IMR-90 (cell line): ENCODE measurements at regions of chr3 and their contacts with region 1.

Region 1: GRCh38 chr3:30319713-30320112 is 286.7 kb upstream of the TGFBR2 start:
- DNase-seq: peak; percentile 57
- ATAC-seq: peak; percentile 63
- H3K4me3 ChIP-seq: no peak overlapping the region
- H3K27ac ChIP-seq: no peak overlapping the region
- H3K4me1 ChIP-seq: peaks cover 7% of the 10 kb centered on the region; the same call in 1 of the 2 replicates
- H3K27me3 ChIP-seq: no peaks in the 10 kb centered on the region
- CTCF ChIP-seq: peak; percentile 47
- POLR2A ChIP-seq: no peak
- RAD21 ChIP-seq: peak; percentile 60

Region 2: GRCh38 chr3:30042274-30042859 is 277.3 kb before region 1 on chr3:
- CTCF ChIA-PET with region 1: no interaction called
- POLR2A ChIA-PET with region 1: no interaction called
- dilution Hi-C with region 1: no loop called
- in situ Hi-C with region 1: no loop called
- intact Hi-C with region 1: loop called (anchors 10 kb)
- DNase-seq: peak; percentile 79
- ATAC-seq: peak; percentile 81
- H3K4me3 ChIP-seq: no peak overlapping the region
- H3K27ac ChIP-seq: no peak overlapping the region
- H3K4me1 ChIP-seq: no peaks in the 10 kb centered on the region
- H3K27me3 ChIP-seq: no peaks in the 10 kb centered on the region
- CTCF ChIP-seq: peak; percentile 88
- POLR2A ChIP-seq: no peak
- RAD21 ChIP-seq: peak; percentile 92

Region 3: DNA sequence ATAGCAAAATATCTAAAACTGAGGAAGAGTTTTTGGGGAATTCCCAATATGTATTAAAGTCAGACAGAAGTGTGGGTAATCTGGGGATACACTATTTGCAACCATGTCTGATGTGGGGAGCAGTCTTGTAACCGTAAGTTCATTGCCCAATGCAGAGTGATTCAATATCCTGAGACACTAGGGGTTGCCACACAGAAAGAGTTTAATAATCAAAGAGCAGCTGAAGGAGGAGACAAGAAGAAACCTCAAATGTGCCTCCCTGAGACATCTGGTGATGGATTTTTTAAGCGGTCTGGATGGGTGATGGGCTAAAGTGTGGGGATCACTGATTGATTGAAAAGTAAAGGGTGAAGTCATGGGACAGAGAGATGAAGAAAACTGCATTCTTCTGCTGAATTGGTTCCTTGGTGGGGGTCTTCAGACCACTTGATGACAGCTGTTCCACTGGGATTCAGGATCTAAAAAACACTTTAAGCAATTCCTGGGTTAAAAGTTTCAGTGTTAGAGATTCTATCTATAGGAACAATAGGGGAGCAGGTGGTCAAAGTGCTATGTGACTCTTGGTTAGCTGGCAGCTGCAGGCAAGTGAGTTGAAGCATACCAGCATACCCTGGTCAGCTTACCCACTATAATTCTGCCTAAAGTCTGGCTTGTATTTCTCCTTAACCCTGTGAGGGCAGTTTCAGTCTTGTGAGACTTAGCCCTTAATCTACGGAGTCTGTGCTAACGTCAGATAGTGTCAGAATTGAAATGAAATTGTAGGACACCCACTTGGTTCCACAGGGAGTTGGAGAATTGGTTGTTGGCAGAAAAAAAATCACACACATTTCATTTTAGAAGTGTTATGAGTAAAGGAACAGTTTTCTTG is 139.2 kb before region 1 on chr3:
- CTCF ChIA-PET with region 1: no interaction called
- POLR2A ChIA-PET with region 1: no interaction called
- dilution Hi-C with region 1: no loop called
- in situ Hi-C with region 1: no loop called
- intact Hi-C with region 1: no loop called
- DNase-seq: no peak
- ATAC-seq: no peak
- H3K4me3 ChIP-seq: no peak overlapping the region
- H3K27ac ChIP-seq: no peak overlapping the region
- H3K4me1 ChIP-seq: no peaks in the 10 kb centered on the region
- H3K27me3 ChIP-seq: no peaks in the 10 kb centered on the region
- CTCF ChIP-seq: no peak
- POLR2A ChIP-seq: no peak
- RAD21 ChIP-seq: no peak

Region 4: GRCh38 chr3:30538787-30539186 is 219.1 kb after region 1 on chr3:
- CTCF ChIA-PET with region 1: no interaction called
- POLR2A ChIA-PET with region 1: no interaction called
- dilution Hi-C with region 1: no loop called
- in situ Hi-C with region 1: no loop called
- intact Hi-C with region 1: no loop called
- DNase-seq: peak; percentile 94
- ATAC-seq: peak; percentile 87
- H3K4me3 ChIP-seq: no peak overlapping the region
- H3K27ac ChIP-seq: no peak overlapping the region
- H3K4me1 ChIP-seq: peaks cover 5% of the 10 kb centered on the region; the same call in 1 of the 2 replicates
- H3K27me3 ChIP-seq: no peaks in the 10 kb centered on the region
- CTCF ChIP-seq: no peak
- POLR2A ChIP-seq: no peak
- RAD21 ChIP-seq: peak; percentile 10; the same call in 1 of the 2 replicates